OCI-LY7 (cell line): ENCODE measurements at regions of chr17 and their contacts with region 1.

Region 1: DNA sequence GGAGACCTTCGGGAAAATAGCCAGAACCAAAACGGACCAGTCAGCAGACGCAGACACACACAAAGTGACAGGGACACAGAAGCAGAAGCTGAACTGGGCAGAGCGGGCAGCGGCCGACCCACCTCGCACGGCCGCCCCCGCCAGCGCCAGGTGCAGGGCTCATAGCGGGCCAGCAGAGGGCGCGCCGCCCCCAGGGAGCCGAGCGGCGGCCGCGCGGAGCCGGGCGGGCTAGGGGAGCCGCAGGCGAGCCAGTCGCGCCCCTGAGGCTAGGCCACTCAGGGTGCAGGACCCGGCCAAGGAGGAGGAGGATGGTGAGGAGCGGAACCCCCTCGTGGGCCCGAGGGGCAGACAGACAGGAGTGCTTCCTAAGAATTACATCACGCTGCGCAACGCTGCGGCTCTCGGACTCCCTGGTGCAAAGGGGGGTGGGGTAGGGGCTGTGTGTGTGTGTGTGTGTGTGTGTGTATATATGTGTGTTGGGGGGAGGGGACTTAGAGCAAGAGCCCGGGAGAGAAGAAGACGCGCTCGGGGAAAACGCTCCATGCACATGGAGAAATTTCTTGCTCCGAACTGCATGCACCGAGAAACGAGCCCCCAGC is 913 bp upstream of the NOG start:
- DNase-seq: peak; percentile 44
- H3K4me3 ChIP-seq: no peak overlapping the region
- H3K27ac ChIP-seq: no peak overlapping the region
- H3K4me1 ChIP-seq: no peaks in the 10 kb centered on the region
- CTCF ChIP-seq: peak; percentile 84

Region 2: GRCh38 chr17:56222255-56222654 is 370.3 kb before region 1 on chr17:
- CTCF ChIA-PET with region 1: no interaction called
- POLR2A ChIA-PET with region 1: no interaction called
- intact Hi-C with region 1: no loop called
- DNase-seq: no peak
- H3K4me3 ChIP-seq: no peak overlapping the region
- H3K27ac ChIP-seq: no peak overlapping the region
- H3K4me1 ChIP-seq: peaks cover 5% of the 10 kb centered on the region
- CTCF ChIP-seq: no peak

Region 3: GRCh38 chr17:56447171-56447570 is 145.4 kb before region 1 on chr17:
- CTCF ChIA-PET with region 1: no interaction called
- POLR2A ChIA-PET with region 1: no interaction called
- intact Hi-C with region 1: no loop called
- DNase-seq: no peak
- H3K4me3 ChIP-seq: no peak overlapping the region
- H3K27ac ChIP-seq: no peak overlapping the region
- H3K4me1 ChIP-seq: no peaks in the 10 kb centered on the region
- CTCF ChIP-seq: no peak

Region 4: DNA sequence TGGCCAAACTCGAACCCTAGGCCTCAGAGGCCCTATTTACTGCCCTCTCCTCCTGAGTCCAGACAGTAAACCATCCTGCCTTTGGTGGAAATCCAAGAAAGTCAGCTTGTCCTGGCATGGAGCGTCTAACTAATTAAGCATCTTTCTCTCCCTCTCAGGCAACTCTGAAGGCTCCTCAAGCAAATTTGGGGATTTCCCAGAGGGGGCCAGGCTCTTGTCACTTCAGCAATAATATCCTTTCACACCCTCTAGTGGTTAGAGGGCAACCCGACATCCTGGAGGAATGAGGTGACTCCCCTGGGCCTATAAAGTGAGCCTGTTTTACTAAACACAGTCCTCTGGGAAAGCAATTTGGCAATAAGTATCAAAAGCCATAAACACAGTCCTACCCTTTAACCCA is 61.3 kb after region 1 on chr17:
- CTCF ChIA-PET with region 1: no interaction called
- POLR2A ChIA-PET with region 1: no interaction called
- intact Hi-C with region 1: loop called (anchors 2 kb)
- DNase-seq: peak; percentile 39
- H3K4me3 ChIP-seq: no peak overlapping the region
- H3K27ac ChIP-seq: no peak overlapping the region
- H3K4me1 ChIP-seq: no peaks in the 10 kb centered on the region
- CTCF ChIP-seq: peak; percentile 75

Region 5: GRCh38 chr17:56715613-56716357 is 123.2 kb after region 1 on chr17:
- CTCF ChIA-PET with region 1: interaction called, 5 read pairs
- POLR2A ChIA-PET with region 1: no interaction called
- intact Hi-C with region 1: loop called (anchors 1 kb)
- DNase-seq: peak; percentile 84
- H3K4me3 ChIP-seq: no peak overlapping the region
- H3K27ac ChIP-seq: no peak overlapping the region
- H3K4me1 ChIP-seq: no peaks in the 10 kb centered on the region
- CTCF ChIP-seq: peak; percentile 94

Region 6: GRCh38 chr17:56779898-56780733 is 187.5 kb after region 1 on chr17:
- CTCF ChIA-PET with region 1: no interaction called
- POLR2A ChIA-PET with region 1: no interaction called
- intact Hi-C with region 1: loop called (anchors 1 kb)
- DNase-seq: peak; percentile 73
- H3K4me3 ChIP-seq: peak overlapping the region; percentile 56
- H3K27ac ChIP-seq: no peak overlapping the region
- H3K4me1 ChIP-seq: peaks cover 10% of the 10 kb centered on the region
- CTCF ChIP-seq: peak; percentile 95

Region 7: DNA sequence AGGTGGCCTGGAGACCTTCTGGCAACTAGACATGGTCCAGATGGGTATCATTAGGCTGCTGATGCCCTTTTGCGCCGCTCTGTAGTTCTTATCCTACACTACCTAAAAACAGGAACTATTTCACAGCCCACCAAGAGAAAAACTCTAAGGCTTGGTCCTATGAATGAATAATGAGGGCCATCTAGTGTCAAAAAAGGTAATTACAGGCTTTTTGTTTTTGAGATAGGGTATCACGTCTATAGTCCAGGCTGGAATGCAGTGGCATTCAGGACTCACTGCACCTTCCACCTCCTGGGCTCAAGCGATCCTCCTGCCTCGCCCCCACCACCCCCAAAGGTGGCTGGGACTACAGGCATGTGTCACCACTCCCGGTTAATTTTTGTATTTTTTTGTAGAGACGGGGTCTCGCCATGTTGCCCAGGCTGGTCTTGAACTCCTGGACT is 347.3 kb after region 1 on chr17:
- CTCF ChIA-PET with region 1: no interaction called
- POLR2A ChIA-PET with region 1: no interaction called
- intact Hi-C with region 1: loop called (anchors 5 kb)
- DNase-seq: peak; percentile 79
- H3K4me3 ChIP-seq: no peak overlapping the region
- H3K27ac ChIP-seq: no peak overlapping the region
- H3K4me1 ChIP-seq: no peaks in the 10 kb centered on the region
- CTCF ChIP-seq: peak; percentile 87